Uterus (tissue), 4 donors: ENCODE measurements at regions of chr1 and their contacts with region 1.

Region 1: DNA sequence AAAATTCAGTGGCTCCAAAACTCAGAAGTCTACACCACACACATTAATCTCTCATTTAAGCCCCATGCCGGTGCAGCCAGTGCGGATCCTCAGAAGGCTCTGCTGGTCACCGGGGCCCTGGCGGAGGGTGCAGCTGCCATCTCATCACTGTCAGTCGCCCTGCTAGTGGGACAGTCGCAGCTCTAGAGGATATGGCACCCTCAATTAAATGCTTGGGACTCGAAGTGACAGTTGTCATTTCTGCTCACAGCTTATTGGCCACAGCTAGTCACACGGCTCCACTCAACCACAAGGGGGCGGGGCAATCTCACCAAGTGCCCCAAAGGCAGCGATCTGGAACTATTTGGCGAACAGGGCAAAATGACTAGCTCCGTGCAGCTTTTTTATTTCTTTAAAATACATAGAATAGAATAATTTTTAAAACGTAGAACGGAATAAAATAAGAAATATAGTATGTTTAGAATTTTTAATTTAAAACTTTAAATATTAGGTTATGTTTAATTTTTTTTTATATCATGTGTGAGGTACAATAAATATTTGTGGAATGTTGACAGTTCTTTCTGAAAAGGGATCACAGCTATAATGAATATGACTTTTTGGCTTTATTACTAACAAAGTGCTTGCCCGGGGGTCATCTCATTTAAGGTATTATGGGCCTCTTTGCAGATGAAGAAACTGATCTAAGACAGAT is 8.0 kb upstream of the MAN1C1 start:
- DNase-seq: peak; percentile 83 to 89
- H3K4me3 ChIP-seq: no peak overlapping the region
- H3K27ac ChIP-seq: no peak overlapping the region
- H3K4me1 ChIP-seq: no peaks in the 10 kb centered on the region
- H3K27me3 ChIP-seq: no peaks in the 10 kb centered on the region
- CTCF ChIP-seq: peak; percentile 87 to 97 (median 91)
- POLR2A ChIP-seq: no peak

Region 2: DNA sequence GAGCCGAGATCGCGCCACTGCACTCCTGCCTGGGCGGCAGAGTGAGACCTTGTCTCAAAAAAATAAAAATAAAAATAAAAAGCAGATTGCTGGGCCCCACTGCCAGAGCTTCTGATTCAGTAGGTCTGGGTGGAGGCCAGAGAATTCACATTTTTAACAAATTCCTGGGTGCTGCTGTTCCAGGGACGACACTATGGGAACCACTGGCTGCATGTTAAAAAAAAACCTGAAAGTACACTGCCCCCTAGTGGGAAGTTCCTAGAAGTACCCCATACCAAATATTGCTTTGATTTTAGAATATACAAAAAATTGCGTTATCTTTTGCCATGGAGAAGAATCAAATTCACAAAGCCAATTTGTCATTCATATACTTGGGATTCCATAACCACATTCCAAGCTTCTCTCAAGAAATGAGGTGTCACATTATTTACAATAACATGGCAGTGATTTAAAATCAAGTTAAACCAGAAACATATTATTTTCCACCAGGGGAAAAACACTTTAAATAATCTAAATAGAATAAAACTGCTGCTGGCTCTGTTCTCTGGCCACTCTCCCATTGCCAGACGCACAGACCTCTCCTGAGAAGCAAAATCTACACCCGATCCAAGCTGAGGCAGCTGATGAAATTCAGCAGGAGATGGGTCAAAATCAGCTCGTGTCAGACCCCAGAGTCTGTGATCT is 403.7 kb before region 1 on chr1:
- intact Hi-C with region 1: no loop called
- DNase-seq: no peak
- H3K4me3 ChIP-seq: no peak overlapping the region
- H3K27ac ChIP-seq: no peak overlapping the region
- H3K4me1 ChIP-seq: no peaks in the 10 kb centered on the region
- H3K27me3 ChIP-seq: no peaks in the 10 kb centered on the region
- CTCF ChIP-seq: peak; percentile 36 to 68 (median 63)
- POLR2A ChIP-seq: no peak

Region 3: DNA sequence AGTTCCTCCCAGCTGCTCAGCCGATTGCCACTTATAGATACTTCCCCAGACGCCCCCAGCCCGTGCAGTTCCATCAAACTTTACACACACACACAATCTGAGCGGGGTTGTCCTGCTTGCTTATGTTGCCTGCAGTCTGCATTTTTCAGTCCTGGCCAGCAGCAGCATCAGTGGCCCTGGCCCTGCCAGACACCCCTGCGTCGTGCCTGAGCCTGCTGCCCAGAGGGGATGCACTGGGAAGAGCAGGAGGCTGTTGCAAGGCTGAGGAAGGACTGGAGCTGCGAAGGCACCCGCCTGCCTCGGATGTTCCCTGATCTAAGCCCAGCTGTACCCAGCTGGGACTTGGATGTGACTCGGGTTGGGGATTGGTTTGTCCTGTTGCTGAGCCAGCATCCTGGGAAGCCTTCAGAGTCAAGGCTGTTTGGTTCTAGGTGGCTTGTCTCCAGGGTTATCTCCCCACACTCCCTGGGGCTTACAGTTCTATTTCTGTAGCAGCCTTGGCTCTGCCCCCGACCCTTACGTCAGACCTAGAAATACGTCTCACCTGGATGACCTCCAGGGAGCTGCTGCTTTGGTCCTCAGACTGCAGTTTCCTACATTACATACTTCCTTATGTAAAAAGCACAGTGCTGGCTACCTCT is 50.3 kb after region 1 on chr1:
- intact Hi-C with region 1: no loop called
- DNase-seq: peak; percentile 84 to 88
- H3K4me3 ChIP-seq: no peak overlapping the region
- H3K27ac ChIP-seq: peak overlapping the region; percentile 47 to 72
- H3K4me1 ChIP-seq: peaks cover 3 to 5% of the 10 kb centered on the region in 2 donors
- H3K27me3 ChIP-seq: no peaks in the 10 kb centered on the region
- CTCF ChIP-seq: no peak
- POLR2A ChIP-seq: no peak

Region 4: DNA sequence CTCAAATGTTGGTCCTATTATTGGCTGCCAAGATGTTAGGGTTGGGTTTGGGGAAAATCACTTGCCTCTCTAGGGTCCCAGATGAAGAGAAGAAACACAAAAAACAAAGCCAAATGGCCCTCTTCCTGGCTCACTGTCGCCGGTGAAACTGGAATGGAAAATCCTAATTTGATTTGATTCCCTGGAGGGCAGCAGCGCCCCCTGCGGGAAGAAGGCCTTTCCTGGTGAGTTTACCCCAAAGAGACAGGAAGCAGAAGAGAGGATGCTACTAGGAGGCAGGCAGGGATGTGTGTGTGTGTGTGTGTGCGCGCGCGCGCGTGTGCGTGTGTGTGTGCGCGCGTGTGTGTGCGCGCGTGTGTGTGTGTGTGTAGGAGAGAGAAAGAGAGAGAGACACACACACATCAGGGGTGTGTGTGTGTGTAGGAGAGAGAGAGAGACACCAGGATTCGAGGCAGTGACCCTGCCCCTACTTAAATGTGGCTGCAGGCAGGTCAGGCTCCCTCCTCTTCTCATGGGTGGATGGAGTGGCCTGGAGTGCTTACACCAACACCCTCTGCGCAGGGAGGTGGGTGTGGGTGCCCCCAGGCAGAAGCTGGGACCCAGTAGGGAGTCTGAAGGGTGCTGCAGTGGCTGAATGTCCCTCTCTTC is 188.3 kb after region 1 on chr1:
- intact Hi-C with region 1: loop called (anchors 5 kb)
- DNase-seq: peak; percentile 84 to 85
- H3K4me3 ChIP-seq: no peak overlapping the region
- H3K27ac ChIP-seq: no peak overlapping the region
- H3K4me1 ChIP-seq: no peaks in the 10 kb centered on the region
- H3K27me3 ChIP-seq: no peaks in the 10 kb centered on the region
- CTCF ChIP-seq: peak; percentile 76 to 90 (median 81)
- POLR2A ChIP-seq: no peak

Region 5: DNA sequence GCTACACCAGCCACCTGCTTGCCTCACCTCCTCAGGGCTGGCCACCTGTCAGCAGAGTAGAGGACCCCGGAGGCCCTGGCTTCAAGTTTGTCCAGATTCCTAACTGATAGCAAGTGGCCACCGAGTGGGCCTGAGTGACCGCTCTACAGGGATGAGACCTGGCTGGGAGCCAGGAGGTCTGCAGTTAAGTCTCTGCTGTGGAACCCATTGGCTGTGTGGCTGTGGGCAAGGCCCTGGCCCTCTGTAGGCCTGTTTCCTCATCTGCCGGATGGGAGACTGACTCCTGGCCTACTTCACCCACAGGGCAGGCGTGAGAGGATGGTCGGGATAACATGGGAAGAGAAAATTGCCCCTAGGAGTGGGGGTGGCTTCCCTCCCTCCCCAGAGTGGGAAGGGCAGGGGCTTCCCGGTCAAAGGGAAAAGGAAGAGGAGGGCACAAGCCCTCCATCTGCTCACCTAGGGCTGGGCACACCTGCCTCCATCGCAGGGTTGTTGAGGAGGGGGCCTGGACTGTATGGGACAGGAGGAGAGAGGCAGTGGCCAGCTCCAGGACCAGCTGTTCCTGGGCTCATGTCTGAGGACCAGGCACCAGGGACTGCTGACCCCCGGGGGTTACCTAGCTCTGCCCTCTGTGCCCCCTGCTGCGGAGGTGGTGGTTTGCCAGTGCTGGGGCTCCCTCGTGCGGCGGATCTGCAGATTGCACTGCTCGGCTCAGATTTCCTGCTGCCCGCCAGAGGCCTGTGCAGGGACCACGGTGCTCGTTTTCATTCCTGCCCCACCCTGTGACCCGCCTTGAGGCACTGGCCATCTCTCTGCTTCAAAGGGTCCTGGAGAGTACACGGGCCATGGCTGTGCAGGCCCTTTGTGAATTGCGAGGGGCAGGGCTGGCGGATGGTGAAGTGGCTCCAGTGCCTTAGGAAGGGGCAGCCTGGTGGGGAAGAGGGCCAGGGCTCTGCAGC is 202.0 kb after region 1 on chr1:
- intact Hi-C with region 1: loop called (anchors 5 kb)
- DNase-seq: peak; percentile 70 to 75
- H3K4me3 ChIP-seq: no peak overlapping the region
- H3K27ac ChIP-seq: no peak overlapping the region
- H3K4me1 ChIP-seq: peaks cover 0 to 5% of the 10 kb centered on the region in 2 donors
- H3K27me3 ChIP-seq: no peaks in the 10 kb centered on the region
- CTCF ChIP-seq: peak; percentile 88 to 93 (median 91)
- POLR2A ChIP-seq: peak in 1 of 2 donors; percentile 32